PC-9 (cell line): ENCODE measurements at regions of chr11 and their contacts with region 1.

Region 1: DNA sequence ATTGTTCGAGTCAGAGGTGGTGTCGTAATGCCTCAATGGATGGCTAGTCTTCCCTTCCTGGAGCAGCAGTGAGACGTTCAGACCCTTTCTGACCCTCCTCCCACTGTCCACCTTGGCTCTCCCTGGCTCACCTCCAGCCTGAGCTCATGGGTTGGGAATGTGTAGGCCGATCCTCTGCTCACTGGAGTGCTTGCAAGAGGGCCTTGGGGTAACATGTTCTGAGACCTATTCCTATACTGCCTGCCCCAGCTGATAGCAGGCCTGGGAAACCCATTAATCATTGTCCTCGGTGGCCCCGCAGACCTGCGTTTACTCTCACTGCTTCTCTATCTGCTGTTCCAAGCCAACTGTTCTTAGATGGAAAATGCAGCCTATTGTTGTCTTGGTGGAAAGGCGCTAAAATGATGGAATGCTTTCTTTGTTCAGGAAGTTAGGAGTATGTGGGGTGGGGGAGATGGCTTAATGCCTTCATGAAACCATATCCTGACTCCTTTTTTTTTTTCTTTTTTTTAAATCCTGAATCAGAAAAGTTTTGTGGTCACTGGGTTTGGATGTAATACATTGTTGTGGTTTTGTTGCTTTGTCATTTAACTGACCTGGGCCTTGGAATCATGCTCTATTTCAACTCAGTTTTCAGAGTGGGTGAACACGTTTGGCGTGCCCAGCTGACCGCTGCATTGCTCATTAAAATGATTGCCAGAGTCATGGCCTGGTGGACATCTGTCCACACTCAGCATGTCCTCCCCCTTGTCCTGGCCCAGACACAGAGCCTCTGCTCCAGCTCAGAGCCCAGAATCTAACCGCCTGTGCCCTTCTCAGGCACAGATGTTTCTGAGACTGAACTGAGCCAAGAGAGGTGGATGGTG is 72.5 kb downstream of the MICAL2 start:
- DNase-seq: peak; percentile 89 to 95
- H3K4me3 ChIP-seq: 0 out of 2 replicates have a peak overlapping the region, but pooled peaks have one; percentile 24
- H3K27ac ChIP-seq: peak overlapping the region; percentile 98
- H3K4me1 ChIP-seq: peaks cover 68% of the 10 kb centered on the region
- H3K27me3 ChIP-seq: no peaks in the 10 kb centered on the region
- CTCF ChIP-seq: no peak

Region 2: DNA sequence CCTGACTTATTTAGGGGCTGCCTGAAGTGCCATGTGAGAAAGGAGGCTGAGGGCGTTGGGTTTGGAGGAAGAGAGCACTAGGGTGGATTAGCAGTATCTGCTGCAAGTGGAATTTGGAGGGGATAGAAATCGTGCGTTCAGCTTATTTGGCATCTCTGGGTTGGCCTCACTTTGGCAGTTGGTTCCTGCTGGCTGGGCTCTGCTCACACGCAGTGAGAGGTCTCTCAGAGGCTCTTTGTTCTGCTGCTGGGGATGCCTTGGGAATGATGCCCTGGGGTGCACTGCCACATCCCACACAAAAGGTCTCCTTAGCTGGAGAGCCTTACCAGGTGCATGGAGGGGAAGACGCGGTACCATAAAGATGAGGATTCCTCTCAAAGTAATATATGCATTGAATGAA is 90.2 kb before region 1 on chr11:
- CTCF ChIA-PET with region 1: interaction called, 3 read pairs
- POLR2A ChIA-PET with region 1: interaction called, 21 read pairs
- intact Hi-C with region 1: loop called (anchors 2 kb)
- DNase-seq: no peak
- H3K4me3 ChIP-seq: no peak overlapping the region
- H3K27ac ChIP-seq: peak overlapping the region; percentile 100
- H3K4me1 ChIP-seq: peaks cover 51% of the 10 kb centered on the region
- H3K27me3 ChIP-seq: no peaks in the 10 kb centered on the region
- CTCF ChIP-seq: no peak

Region 3: GRCh38 chr11:12167098-12168000 is 15.6 kb before region 1 on chr11:
- CTCF ChIA-PET with region 1: no interaction called
- POLR2A ChIA-PET with region 1: interaction called, 9 read pairs
- intact Hi-C with region 1: loop called (anchors 2 kb)
- DNase-seq: peak; percentile 64 to 95
- H3K4me3 ChIP-seq: peak overlapping the region; percentile 34; the same call in 1 of the 2 replicates
- H3K27ac ChIP-seq: peak overlapping the region; percentile 95
- H3K4me1 ChIP-seq: peaks cover 69% of the 10 kb centered on the region
- H3K27me3 ChIP-seq: no peaks in the 10 kb centered on the region
- CTCF ChIP-seq: no peak

Region 4: DNA sequence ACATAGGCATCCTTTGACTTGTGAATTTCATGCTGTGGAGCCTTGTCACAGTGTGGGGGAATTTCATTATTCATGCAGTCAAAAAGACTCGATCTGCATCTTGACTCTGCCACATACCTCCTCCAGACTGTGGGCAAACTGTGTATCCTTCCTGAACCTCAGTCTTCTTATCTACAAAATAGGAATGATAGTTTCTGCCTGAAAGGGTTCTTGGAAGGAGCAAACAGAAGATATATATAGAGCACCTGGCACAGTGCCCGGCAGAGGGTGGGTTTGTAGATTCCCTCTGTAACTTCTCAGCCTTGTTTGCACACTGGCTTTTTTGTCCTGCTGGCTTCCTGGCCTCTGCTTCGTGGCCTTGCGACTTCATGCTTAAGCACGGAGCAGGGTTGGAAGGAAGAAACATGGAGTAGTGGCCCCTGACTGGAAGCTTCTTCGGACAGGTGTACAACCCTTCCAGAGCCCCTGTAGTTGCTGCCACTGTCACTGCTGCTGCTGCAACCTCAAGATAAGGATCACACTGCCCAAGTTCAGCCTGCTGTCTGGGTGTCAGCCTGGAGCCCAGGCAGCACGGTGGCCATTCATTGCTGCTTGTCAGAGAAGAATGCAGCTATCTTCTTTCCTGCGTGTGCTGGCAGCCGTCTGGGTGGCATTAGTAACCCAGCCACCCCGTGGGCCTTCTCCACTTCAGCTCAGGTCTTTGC is 33.9 kb after region 1 on chr11:
- CTCF ChIA-PET with region 1: no interaction called
- POLR2A ChIA-PET with region 1: no interaction called
- intact Hi-C with region 1: no loop called
- DNase-seq: no peak
- H3K4me3 ChIP-seq: no peak overlapping the region
- H3K27ac ChIP-seq: no peak overlapping the region
- H3K4me1 ChIP-seq: peaks cover 81% of the 10 kb centered on the region
- H3K27me3 ChIP-seq: no peaks in the 10 kb centered on the region
- CTCF ChIP-seq: no peak

Region 5: DNA sequence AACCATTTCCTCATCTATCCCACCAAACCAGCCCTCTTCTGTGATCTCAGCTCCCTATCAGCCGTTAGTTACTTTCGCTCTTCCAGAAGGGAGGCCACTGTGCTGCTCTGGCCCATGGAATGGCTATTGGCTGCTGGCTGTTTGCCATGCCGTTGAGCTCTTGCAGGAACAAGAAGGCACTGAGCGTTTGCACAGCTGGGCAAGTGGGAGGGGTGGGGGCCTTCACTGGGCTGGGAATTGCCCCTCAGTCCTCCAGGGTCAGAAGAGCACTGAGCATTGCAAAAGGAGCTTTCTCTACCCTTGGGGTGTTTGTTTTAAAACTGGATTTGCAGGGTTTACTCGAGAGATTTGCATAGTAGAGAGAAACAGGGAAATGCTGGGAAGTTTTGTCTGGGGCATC is 65.4 kb after region 1 on chr11:
- CTCF ChIA-PET with region 1: no interaction called
- POLR2A ChIA-PET with region 1: no interaction called
- intact Hi-C with region 1: loop called (anchors 1 kb)
- DNase-seq: peak; percentile 88 to 97
- H3K4me3 ChIP-seq: no peak overlapping the region
- H3K27ac ChIP-seq: peak overlapping the region; percentile 59
- H3K4me1 ChIP-seq: peaks cover 62% of the 10 kb centered on the region
- H3K27me3 ChIP-seq: no peaks in the 10 kb centered on the region
- CTCF ChIP-seq: no peak